Dorsolateral prefrontal cortex (tissue), 120 donors: ENCODE measurements at regions of chr3 and their contacts with region 1.

Region 1: DNA sequence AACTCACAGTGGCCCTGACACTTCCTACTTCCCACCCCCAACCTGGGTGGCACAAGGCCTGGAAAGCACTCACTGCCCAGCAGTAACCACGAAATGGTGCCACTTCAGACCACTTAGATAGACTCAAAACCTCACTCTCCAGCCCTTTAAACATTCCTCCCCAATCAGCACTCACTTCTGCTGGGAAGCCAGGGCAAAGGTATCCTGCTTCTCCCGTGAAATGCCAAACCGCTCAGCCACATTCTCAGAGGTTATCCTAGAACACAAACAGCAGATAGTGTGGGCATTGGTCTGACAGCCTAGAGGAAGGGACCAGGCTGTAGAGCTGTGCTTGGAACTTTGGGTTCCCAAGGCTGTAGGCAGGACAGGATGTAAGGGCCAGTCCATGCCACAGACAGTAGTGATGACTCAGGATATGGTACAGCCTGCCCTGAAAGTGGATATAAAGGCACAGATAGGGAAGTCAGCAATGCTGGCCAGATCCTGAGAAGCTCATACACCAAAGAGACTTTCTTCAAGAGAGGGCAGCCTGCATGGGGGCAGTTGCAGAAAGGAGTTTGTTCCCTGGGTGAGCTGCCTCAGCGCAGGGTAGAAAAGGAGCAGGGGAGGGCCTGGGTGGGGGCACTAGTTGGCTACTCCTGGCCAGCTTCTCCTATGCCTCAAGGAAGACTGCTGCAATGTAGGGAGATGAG is 9.2 kb downstream of the ACAA1 start:
- DNase-seq: no peak
- H3K4me3 ChIP-seq: no peak overlapping the region
- H3K27ac ChIP-seq: peak overlapping the region in 4 of 59 donors; percentile 1 to 27 (median 17)
- H3K27me3 ChIP-seq: no peaks in the 10 kb centered on the region
- CTCF ChIP-seq: no peak

Region 2: DNA sequence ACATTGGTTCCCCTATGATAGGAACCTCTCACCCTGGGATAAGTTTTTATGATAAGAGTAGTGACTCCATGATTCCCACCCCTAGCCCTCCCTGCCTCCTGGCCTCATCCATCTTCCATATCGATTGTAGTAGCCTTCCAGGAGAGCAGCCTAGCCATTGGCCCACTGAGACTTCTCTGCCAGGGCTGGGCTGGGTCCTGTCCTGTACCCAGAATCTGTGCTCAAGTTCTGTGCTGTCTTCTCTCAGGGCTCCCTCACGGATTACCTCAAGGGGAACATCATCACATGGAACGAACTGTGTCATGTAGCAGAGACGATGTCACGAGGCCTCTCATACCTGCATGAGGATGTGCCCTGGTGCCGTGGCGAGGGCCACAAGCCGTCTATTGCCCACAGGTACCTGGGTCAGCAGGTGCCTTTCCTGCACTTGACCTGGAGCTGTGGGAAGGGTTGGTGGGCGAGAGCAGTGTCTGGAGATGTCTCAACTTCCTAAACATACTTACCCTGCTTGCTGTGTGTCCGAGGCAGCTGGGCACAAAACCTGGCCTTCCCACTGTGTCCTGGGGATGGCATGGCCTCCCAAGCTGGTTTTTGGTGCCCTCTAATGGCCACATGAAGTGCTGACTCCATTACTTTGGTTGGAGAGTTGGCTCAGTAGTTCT is 351.8 kb after region 1 on chr3:
- intact Hi-C with region 1: loop called (anchors 5 to 10 kb)
- DNase-seq: peak in 8 of 10 donors; percentile 52 to 80 (median 72)
- H3K4me3 ChIP-seq: no peak overlapping the region
- H3K27ac ChIP-seq: no peak overlapping the region
- H3K27me3 ChIP-seq: no peaks in the 10 kb centered on the region
- CTCF ChIP-seq: peak; percentile 42 to 95 (median 84)